ENCODE measurements at regions of chr20 and their contacts with region 1.

Region 1: DNA sequence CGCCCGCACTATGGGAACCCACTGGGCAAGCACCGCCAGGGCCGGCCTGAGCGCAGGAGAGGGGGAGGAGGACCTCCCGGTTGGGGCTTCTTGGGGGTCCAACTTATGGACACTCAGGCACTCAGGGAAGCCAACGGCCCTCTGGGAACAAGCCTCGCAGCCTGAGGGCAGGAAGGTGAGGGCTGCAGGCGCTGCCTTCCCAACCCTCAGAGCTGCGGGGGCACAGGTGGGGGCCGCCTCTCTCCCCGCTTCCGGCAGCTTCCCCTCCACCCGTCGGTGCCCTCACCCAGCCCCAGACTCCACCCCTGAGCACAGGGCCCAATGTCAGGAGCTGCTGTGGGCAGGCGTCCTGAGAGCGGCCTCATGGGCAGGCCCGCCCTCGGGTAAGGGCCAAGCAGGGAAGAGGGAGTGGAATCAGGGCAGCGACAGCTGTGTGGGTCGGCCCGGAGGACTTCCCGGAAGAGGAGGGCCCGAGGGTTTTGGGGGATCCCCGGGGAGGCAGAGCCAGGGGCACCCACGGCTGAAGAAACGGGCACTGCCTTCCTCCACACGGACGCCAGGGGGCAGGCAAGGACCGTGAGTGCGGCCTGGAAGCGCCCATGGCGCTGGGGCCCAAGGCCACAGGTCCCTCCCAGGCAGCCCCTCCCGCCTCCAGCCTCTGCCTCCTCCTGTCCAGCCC is 488 bp upstream of the PTK6 start:
- DNase-seq: peak; percentile 100
- H3K4me3 Mint-ChIP-seq: peak overlapping the region; percentile 89
- H3K27ac Mint-ChIP-seq: peak overlapping the region; percentile 84
- H3K4me1 Mint-ChIP-seq: peaks cover 60% of the 10 kb centered on the region
- H3K27me3 Mint-ChIP-seq: no peaks in the 10 kb centered on the region
- CTCF ChIP-seq: peak; percentile 99

Region 2: GRCh38 chr20:63520504-63520933 is 17.1 kb before region 1 on chr20 and contains the start of gene PPDPF:
- CTCF ChIA-PET with region 1: interaction called, 13 read pairs
- intact Hi-C with region 1: no loop called
- DNase-seq: peak; percentile 90
- H3K4me3 Mint-ChIP-seq: peak within 1 kb of the TSS; percentile 95
- H3K27ac Mint-ChIP-seq: peak within 1 kb of the TSS; percentile 89
- H3K4me1 Mint-ChIP-seq: peaks cover 18% of the 10 kb centered on the region
- H3K27me3 Mint-ChIP-seq: no peaks in the 10 kb centered on the region
- CTCF ChIP-seq: no peak
- total RNA-seq, gene PPDPF: 517 and 545 TPM in 2 replicates

Region 3: GRCh38 chr20:63641792-63642544 is 104.3 kb after region 1 on chr20:
- CTCF ChIA-PET with region 1: interaction called, 37 read pairs
- intact Hi-C with region 1: no loop called
- DNase-seq: peak; percentile 99
- H3K4me3 Mint-ChIP-seq: peak overlapping the region; percentile 73
- H3K27ac Mint-ChIP-seq: peak overlapping the region; percentile 60
- H3K4me1 Mint-ChIP-seq: peaks cover 8% of the 10 kb centered on the region
- H3K27me3 Mint-ChIP-seq: no peaks in the 10 kb centered on the region
- CTCF ChIP-seq: peak; percentile 61

Region 4: DNA sequence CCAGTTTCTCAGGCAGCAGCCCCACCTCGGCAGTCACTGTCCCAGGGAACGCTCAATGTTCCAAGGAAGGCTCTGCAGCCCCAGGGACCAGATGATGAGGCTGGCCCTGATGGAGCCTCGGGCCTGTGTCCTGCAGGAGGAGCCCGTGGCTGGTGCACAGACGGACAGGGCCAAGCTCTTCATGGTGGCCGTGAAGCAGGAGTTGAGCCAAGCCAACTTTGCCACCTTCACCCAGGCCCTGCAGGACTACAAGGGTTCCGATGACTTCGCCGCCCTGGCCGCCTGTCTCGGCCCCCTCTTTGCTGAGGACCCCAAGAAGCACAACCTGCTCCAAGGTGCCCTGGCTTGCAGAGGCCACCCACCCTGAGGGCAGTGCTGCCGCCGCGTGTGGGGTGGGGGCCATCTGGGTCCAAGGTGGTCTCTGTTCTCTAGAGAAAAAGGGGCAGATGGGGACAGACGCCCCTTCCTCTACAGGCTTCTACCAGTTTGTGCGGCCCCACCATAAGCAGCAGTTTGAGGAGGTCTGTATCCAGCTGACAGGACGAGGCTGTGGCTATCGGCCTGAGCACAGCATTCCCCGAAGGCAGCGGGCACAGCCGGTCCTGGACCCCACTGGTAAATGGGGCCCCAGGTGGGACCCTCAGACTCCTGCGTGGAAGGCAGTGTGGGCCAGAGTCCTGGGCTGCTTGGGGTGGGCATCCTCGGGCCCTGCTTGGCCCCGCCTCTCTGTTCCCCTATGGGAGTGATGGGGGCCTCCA is 155.2 kb after region 1 on chr20:
- CTCF ChIA-PET with region 1: interaction called, 11 read pairs
- intact Hi-C with region 1: no loop called
- DNase-seq: peak; percentile 64
- H3K4me3 Mint-ChIP-seq: no peak overlapping the region
- H3K27ac Mint-ChIP-seq: peak overlapping the region; percentile 83
- H3K4me1 Mint-ChIP-seq: peaks cover 19% of the 10 kb centered on the region
- H3K27me3 Mint-ChIP-seq: no peaks in the 10 kb centered on the region
- CTCF ChIP-seq: no peak

Region 5: DNA sequence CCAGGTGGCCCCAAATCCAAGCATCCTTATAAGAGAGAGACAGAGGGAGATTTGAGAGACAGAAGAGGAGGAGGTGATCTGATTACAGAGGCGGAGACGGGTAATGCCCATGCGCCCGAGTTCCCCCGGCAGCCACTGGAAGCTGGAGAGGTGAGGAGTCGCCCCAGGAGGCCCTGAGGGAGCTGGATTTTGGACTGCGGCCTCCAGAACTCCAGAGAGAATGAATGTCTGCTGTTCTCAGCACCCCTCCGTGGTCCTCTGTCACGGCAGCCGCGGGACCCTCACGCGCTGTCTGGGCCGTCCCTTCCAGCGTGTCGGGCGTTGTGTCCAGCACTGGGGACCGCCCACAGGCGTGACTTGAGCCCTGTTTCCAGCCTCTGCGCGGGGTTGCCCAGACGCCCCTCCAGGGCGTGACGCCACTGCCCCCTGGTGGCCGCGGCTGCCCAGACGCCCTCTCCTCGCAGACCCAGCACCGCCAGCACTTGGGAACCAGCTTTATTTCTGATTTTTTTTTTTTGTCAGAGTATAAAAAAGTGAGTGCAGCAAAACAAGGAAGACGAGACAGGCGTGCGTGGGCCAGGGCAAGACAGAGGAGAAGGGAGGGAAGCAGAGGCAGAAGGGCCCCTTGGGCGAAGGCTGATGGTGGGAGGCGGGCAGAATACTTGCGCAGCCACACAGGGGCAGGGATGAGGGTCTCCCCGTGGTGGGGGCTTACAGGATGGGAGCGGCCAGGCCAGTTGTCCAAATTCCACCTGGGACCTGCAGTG is 436.2 kb after region 1 on chr20:
- CTCF ChIA-PET with region 1: interaction called, 31 read pairs
- intact Hi-C with region 1: loop called (anchors 5 kb)
- DNase-seq: peak; percentile 98
- H3K4me3 Mint-ChIP-seq: peak overlapping the region; percentile 39
- H3K27ac Mint-ChIP-seq: peak overlapping the region; percentile 0
- H3K4me1 Mint-ChIP-seq: peaks cover 44% of the 10 kb centered on the region
- H3K27me3 Mint-ChIP-seq: no peaks in the 10 kb centered on the region
- CTCF ChIP-seq: peak; percentile 99